Activated naive CD8-positive, alpha-beta T cell treated with anti-CD3 and anti-CD28 coated beads, Interleukin-2, amount 10 ng/mL, durations not matched to agents 7 days and 5 days (primary cell): ENCODE measurements at regions of chr12 and their contacts with region 1.

Region 1: DNA sequence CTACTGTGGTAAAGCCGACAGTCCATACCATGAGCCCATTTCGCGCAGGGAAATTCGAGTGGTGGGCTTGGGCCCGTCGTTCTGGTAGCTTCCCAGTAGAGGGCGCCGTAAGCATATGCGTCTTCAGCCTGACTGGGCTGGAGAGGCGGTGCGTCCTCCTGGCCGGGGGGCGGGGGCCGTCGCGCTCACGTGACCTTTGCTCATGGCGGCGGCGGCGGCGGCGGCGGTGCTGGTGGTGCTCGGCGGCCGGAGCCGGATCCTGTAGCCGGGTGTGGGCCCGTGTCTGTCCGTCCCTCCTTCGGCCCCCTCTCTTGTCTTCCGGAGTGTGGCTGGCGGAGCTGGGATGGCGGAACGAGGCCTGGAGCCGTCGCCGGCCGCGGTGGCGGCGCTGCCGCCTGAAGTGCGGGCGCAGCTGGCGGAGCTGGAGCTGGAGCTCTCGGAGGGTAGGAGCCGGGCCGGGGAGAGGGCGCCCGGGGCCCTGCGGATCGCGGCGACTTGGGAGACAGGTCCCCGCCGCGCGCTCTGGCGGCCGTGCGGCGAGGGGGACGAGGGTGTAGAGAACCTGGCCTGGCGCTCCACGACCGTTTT is at the start of gene DIP2B:
- DNase-seq: peak; percentile 94
- ATAC-seq: peak; percentile 81
- H3K4me3 Mint-ChIP-seq: peak within 1 kb of the TSS; percentile 94
- H3K27ac Mint-ChIP-seq: peak within 1 kb of the TSS; percentile 91
- H3K4me1 Mint-ChIP-seq: peaks cover 45% of the 10 kb centered on the region
- H3K27me3 Mint-ChIP-seq: no peaks in the 10 kb centered on the region
- total RNA-seq, gene DIP2B: 19.5 to 21.3 TPM

Region 2: GRCh38 chr12:50362671-50363070 is 142.2 kb before region 1 on chr12:
- POLR2A ChIA-PET with region 1: no interaction called
- DNase-seq: no peak
- ATAC-seq: no peak
- H3K4me3 Mint-ChIP-seq: no peak overlapping the region
- H3K27ac Mint-ChIP-seq: no peak overlapping the region
- H3K4me1 Mint-ChIP-seq: no peaks in the 10 kb centered on the region
- H3K27me3 Mint-ChIP-seq: peaks cover 1% of the 10 kb centered on the region

Region 3: GRCh38 chr12:50488801-50489200 is 16.1 kb before region 1 on chr12:
- POLR2A ChIA-PET with region 1: no interaction called
- DNase-seq: no peak
- ATAC-seq: no peak
- H3K4me3 Mint-ChIP-seq: no peak overlapping the region
- H3K27ac Mint-ChIP-seq: no peak overlapping the region
- H3K4me1 Mint-ChIP-seq: no peaks in the 10 kb centered on the region
- H3K27me3 Mint-ChIP-seq: no peaks in the 10 kb centered on the region

Region 4: DNA sequence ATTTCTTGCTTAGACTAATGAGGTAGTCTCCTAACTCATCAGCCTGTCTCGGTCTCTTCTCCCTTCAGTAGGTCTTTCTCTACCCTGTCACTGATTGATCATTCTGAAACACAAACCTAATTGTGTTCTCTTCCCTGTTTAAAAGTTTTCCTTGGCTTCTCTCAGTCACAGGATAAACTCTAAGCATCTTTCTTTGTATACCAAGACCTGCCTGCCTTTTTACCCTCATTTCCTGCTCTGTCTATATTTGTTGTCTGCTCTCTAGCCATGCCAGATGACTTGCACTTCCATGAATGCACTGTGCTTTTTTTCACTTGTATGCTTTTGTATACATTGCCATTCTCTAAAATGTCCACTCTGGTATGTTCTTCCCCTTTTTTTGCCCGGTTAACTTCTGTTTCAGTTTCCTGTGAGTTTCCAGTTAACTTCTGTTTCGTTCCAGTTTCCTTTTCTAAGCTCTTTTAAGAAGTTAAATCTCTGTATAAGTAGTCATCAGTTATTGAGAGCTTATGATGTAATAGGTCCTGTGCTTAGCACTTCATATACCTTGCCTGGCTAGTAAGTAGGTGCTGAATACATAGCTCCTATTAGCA is 12.7 kb after region 1 on chr12:
- POLR2A ChIA-PET with region 1: interaction called, 15 read pairs
- DNase-seq: no peak
- ATAC-seq: peak; percentile 76
- H3K4me3 Mint-ChIP-seq: no peak overlapping the region
- H3K27ac Mint-ChIP-seq: no peak overlapping the region
- H3K4me1 Mint-ChIP-seq: peaks cover 38% of the 10 kb centered on the region
- H3K27me3 Mint-ChIP-seq: no peaks in the 10 kb centered on the region

Region 5: DNA sequence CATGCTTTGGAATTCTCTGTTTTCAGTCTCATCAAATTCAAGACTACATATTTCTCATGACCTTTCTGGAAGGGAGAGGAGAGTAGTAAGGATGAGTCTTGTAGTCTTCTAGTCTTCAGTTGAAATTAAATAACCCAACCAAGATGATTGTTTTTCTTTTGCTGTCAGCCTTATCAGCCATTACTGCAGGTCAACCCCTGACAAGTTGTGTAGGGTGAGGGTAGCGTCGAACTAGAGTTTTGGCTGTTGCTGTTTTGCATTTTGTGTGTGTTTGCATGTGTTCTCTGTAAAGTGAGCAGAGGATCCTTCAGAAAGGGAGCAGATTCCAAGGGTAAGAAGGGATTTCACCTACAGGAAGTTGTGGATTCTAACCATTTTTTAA is 28.3 kb after region 1 on chr12:
- POLR2A ChIA-PET with region 1: interaction called, 20 read pairs
- DNase-seq: no peak
- ATAC-seq: no peak
- H3K4me3 Mint-ChIP-seq: no peak overlapping the region
- H3K27ac Mint-ChIP-seq: no peak overlapping the region
- H3K4me1 Mint-ChIP-seq: peaks cover 26% of the 10 kb centered on the region
- H3K27me3 Mint-ChIP-seq: no peaks in the 10 kb centered on the region

Region 6: DNA sequence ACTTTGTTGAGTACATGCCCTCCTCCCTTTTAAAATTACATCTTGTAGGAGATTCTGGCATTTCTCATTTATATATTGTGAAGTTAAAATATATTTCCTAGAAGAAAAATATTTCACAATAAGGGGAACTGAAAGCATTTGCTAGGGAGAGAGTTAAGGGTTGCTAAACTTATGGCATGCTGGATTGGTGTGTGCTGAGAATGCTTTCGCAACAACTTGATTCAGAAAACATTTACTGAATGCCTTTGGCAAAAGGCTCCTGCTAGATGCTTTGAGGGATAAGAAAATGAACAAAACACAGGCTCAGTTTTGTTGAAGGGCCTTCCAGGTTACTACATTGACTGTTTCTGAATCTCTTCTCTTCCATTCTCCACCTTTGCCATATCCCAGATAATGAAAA is 67.4 kb after region 1 on chr12:
- POLR2A ChIA-PET with region 1: no interaction called
- DNase-seq: no peak
- ATAC-seq: no peak
- H3K4me3 Mint-ChIP-seq: no peak overlapping the region
- H3K27ac Mint-ChIP-seq: no peak overlapping the region
- H3K4me1 Mint-ChIP-seq: peaks cover 15% of the 10 kb centered on the region
- H3K27me3 Mint-ChIP-seq: no peaks in the 10 kb centered on the region

Region 7: GRCh38 chr12:50642035-50642451 is 137.2 kb after region 1 on chr12:
- POLR2A ChIA-PET with region 1: interaction called, 22 read pairs
- DNase-seq: no peak
- ATAC-seq: no peak
- H3K4me3 Mint-ChIP-seq: no peak overlapping the region
- H3K27ac Mint-ChIP-seq: no peak overlapping the region
- H3K4me1 Mint-ChIP-seq: peaks cover 27% of the 10 kb centered on the region
- H3K27me3 Mint-ChIP-seq: no peaks in the 10 kb centered on the region